Activated naive CD4-positive, alpha-beta T cell treated with anti-CD3 and anti-CD28 coated beads for 36 hours (primary cell): ENCODE measurements at regions of chr1 and their contacts with region 1.

Region 1: DNA sequence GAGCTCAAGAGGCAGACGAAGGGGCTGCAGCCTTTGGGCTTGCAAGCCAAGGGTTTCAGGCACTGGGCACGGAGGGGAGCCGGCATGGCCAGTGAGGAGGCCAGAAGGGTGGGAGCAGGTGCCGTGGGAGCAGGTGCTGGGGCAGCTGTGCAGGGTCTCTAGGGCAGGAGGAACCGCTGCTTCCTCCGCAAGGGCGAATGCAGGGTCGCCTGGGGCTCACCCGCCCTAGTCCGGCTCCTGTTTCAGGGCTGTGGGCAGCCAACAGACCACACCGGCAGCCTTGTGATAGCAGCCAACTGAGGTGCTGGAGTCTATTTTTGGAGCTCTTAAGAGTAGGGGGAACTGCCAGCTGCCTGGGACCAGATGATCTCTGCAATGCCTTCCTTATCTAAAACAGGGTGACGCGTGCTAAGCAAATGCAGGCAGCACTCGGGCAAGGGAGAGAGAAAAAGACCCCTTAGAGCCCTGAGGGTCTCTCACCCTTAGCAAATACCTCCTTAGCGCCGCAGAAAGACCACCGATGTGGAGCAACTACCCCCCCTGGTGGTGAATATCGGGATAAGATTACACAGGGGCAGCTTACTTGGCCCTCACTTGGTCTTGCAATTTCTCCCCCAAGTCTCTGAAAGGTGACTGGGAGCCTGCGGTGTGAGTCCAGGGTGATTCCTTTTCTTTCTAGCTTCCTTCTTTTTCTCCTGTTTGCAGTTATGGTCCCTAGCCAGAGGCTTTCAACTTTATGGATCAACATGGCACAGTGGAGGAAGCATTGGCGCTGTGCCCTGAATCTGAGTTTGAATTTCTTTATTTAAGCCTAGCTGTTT is 20.7 kb upstream of the MAPKAPK2 start:
- DNase-seq: peak; percentile 87
- H3K4me3 Mint-ChIP-seq: peak overlapping the region; percentile 10
- H3K27ac Mint-ChIP-seq: no peak overlapping the region
- H3K4me1 Mint-ChIP-seq: peaks cover 38% of the 10 kb centered on the region
- H3K27me3 Mint-ChIP-seq: peaks cover 18% of the 10 kb centered on the region

Region 2: GRCh38 chr1:206479183-206480125 is 184.6 kb before region 1 on chr1:
- CTCF ChIA-PET with region 1: interaction called, 46 read pairs
- intact Hi-C with region 1: loop called (anchors 1 kb)
- DNase-seq: peak; percentile 85
- H3K4me3 Mint-ChIP-seq: no peak overlapping the region
- H3K27ac Mint-ChIP-seq: peak overlapping the region; percentile 67
- H3K4me1 Mint-ChIP-seq: peaks cover 35% of the 10 kb centered on the region
- H3K27me3 Mint-ChIP-seq: no peaks in the 10 kb centered on the region

Region 3: DNA sequence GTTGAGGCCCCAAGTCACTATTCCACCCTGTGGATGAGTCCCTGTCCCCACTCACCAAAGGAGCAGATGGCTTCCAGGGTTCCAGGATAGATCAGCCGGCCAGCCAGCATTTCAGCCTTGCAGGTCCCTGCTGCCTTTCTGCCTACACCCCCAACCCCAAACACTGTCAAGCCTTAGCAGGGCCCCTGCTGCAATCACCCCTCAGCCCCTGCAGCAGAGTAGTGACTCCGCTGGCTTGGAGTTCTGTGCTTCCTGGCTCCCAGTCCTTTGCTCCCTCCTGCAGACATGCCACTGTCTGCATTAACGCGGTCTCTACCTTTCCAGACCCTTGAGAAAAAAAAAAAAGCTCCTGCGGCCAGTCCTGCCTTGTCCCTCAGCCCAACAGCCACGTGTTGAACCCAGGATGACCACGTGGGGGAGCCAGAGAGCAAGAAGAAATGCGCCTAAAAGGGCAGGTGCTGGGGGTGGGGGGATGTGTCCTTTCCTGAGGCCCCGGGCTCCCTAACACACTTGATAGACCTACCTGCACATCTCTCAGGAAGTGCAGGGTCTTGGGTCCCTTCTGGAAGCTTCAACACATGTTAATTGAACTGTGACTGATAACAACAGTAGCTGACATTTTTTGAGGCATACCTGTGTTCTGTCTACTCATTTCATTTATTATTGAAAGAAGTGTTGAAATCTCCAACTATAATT is 119.3 kb before region 1 on chr1:
- CTCF ChIA-PET with region 1: interaction called, 50 read pairs
- intact Hi-C with region 1: loop called (anchors 2 kb)
- DNase-seq: peak; percentile 89
- H3K4me3 Mint-ChIP-seq: no peak overlapping the region
- H3K27ac Mint-ChIP-seq: peak overlapping the region; percentile 70
- H3K4me1 Mint-ChIP-seq: peaks cover 19% of the 10 kb centered on the region
- H3K27me3 Mint-ChIP-seq: no peaks in the 10 kb centered on the region

Region 4: DNA sequence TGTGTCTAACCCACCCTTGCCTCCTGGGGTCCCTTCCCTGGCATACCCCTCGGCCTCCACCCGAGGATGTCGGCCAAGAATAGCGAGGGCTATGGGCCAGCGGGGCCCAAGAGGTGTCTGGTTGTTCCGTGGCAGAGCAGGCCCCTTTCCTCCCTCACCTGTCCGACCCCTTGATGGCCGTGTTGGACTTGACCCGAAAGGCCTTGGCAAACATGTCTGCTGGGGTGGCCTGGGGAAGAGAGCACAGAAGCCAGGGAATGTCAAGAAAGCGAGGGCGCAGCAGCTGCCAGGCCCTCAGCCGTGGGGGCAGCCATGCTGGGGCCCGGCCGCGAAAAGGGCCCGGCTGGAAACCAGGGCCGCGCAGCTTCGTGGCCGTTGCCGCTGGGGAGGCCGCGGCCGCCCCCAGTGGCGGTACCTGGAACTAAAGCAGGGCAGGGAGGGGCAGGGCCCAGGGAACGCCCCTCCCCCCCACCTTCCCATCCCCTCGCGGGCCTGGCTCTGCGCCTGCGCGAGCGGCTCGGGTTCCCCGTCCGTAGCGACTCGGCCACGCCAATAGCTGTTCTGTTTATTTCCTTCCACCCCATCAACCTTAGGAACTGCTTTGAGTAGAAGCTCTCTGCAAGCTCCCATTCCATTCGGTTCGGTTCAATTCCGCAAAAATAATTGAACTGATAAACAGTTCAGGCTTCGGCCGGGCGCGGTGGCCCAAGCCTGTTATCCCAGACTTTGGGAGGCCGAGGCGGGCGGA is 51.7 kb before region 1 on chr1 and contains the start of gene EIF2D:
- CTCF ChIA-PET with region 1: interaction called, 130 read pairs
- intact Hi-C with region 1: loop called (anchors 1 kb)
- DNase-seq: peak; percentile 95
- H3K4me3 Mint-ChIP-seq: peak within 1 kb of the TSS; percentile 92
- H3K27ac Mint-ChIP-seq: peak within 1 kb of the TSS; percentile 99
- H3K4me1 Mint-ChIP-seq: peaks cover 44% of the 10 kb centered on the region
- H3K27me3 Mint-ChIP-seq: no peaks in the 10 kb centered on the region
- total RNA-seq, gene EIF2D: 116 to 122 TPM

Region 5: GRCh38 chr1:206674745-206675175 is 10.7 kb after region 1 on chr1:
- CTCF ChIA-PET with region 1: interaction called, 65 read pairs
- intact Hi-C with region 1: no loop called
- DNase-seq: no peak
- H3K4me3 Mint-ChIP-seq: no peak overlapping the region
- H3K27ac Mint-ChIP-seq: no peak overlapping the region
- H3K4me1 Mint-ChIP-seq: peaks cover 1% of the 10 kb centered on the region
- H3K27me3 Mint-ChIP-seq: no peaks in the 10 kb centered on the region